GM10248 (cell line): ENCODE measurements at regions of chr3 and their contacts with region 1.

Region 1: GRCh38 chr3:3817865-3818264 is 18.6 kb downstream of the LRRN1 start:
- DNase-seq: no peak
- CTCF ChIP-seq: no peak

Region 2: DNA sequence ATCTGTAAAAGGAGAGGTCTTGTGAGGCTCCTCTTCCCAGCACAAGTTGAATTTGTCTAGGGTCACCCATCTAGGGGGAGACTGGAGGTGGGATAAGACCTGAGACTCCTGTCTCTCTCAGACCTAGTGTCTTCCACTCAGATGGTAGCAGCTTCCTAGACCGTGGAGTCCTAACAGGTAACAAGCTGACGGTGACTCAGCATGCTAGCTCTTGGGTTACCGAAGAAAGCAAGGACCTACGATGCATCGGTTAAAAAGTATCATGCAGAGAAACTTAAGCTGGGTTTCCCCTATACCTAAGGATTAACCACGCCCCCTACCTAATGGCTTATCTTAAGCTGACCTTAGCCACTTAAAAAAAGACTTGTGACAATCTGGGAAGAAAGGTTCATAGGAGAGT is 11.0 kb before region 1 on chr3:
- CTCF ChIA-PET with region 1: interaction called, 10 read pairs
- POLR2A ChIA-PET with region 1: no interaction called
- DNase-seq: no peak
- CTCF ChIP-seq: no peak

Region 3: DNA sequence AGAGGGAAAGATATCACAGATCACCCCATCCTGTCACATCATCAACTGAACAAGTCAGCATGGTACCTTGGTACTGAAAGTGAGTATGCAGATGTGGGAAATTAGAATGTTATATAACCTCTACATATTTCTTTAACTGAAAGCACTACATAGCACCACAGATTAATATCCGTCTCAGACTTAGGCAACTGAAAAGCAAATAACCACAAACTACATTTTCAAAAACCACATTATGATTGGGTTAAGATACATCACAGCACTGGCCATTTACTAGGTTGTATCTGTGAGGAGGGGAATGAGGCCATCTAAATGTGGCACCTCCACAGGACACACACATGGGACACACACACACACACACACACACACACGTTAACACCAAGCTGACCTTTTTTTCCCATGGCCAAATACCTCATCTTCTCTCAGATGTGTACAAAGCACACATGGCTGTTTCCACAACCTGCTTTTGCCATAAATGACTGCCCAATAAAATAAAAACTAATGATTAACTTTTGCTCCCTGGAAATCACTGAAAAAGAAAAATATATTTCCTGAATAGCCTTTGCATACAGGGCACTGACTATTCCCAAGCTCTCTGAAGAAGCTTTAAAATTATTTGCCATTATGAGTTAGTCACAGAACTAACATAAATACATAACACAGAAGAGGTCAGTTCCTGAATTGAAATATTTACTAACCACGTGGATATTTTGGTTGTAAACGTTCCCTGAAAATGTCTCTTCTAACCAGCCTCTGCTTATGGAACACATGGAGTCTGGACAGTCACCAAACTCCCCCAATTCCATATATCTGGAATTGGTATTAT is 589.1 kb after region 1 on chr3:
- CTCF ChIA-PET with region 1: no interaction called
- POLR2A ChIA-PET with region 1: no interaction called
- DNase-seq: no peak
- CTCF ChIP-seq: no peak